Natural killer cell (primary cell): ENCODE measurements at regions of chr2 and their contacts with region 1.

Region 1: GRCh38 chr2:85852937-85853498 is 35.8 kb downstream of the ST3GAL5 start:
- DNase-seq: peak; percentile 71 to 89
- ATAC-seq: peak; percentile 81 to 92 (median 86)
- H3K4me3 ChIP-seq: peak overlapping the region; percentile 12
- H3K4me3 Mint-ChIP-seq: peak overlapping the region; percentile 91
- H3K27ac ChIP-seq: peak overlapping the region; percentile 100
- H3K27ac Mint-ChIP-seq: peak overlapping the region; percentile 94 to 99
- H3K4me1 ChIP-seq: peaks cover 61% of the 10 kb centered on the region
- H3K4me1 Mint-ChIP-seq: peaks cover 66 to 67% of the 10 kb centered on the region in 2 donors
- H3K27me3 ChIP-seq: no peaks in the 10 kb centered on the region
- H3K27me3 Mint-ChIP-seq: no peaks in the 10 kb centered on the region
- CTCF ChIP-seq: no peak

Region 2: GRCh38 chr2:85694052-85695025 is 158.7 kb before region 1 on chr2 and contains the start of gene GNLY:
- intact Hi-C with region 1: loop called (anchors 2 kb)
- DNase-seq: peak; percentile 53 to 77
- ATAC-seq: peak; percentile 57 to 87 (median 79)
- H3K4me3 ChIP-seq: peak within 1 kb of the TSS; percentile 76
- H3K4me3 Mint-ChIP-seq: peak within 1 kb of the TSS; percentile 97
- H3K27ac ChIP-seq: peak within 1 kb of the TSS; percentile 85
- H3K27ac Mint-ChIP-seq: peak within 1 kb of the TSS; percentile 95 to 96
- H3K4me1 ChIP-seq: peaks cover 67% of the 10 kb centered on the region
- H3K4me1 Mint-ChIP-seq: peaks cover 74 to 80% of the 10 kb centered on the region in 2 donors
- H3K27me3 ChIP-seq: no peaks in the 10 kb centered on the region
- H3K27me3 Mint-ChIP-seq: no peaks in the 10 kb centered on the region
- CTCF ChIP-seq: no peak
- total RNA-seq, gene GNLY: 4,938 to 8,199 (median 6,542) TPM

Region 3: GRCh38 chr2:85813982-85814801 is 38.8 kb before region 1 on chr2:
- intact Hi-C with region 1: no loop called
- DNase-seq: peak; percentile 83 to 87
- ATAC-seq: peak; percentile 91 to 99 (median 96)
- H3K4me3 ChIP-seq: no peak overlapping the region
- H3K4me3 Mint-ChIP-seq: no peak overlapping the region
- H3K27ac ChIP-seq: no peak overlapping the region
- H3K27ac Mint-ChIP-seq: no peak overlapping the region
- H3K4me1 ChIP-seq: peaks cover 3% of the 10 kb centered on the region
- H3K4me1 Mint-ChIP-seq: peaks cover 0 to 6% of the 10 kb centered on the region in 2 donors
- H3K27me3 ChIP-seq: no peaks in the 10 kb centered on the region
- H3K27me3 Mint-ChIP-seq: peaks cover 5 to 11% of the 10 kb centered on the region in 2 donors
- CTCF ChIP-seq: peak; percentile 92

Region 4: DNA sequence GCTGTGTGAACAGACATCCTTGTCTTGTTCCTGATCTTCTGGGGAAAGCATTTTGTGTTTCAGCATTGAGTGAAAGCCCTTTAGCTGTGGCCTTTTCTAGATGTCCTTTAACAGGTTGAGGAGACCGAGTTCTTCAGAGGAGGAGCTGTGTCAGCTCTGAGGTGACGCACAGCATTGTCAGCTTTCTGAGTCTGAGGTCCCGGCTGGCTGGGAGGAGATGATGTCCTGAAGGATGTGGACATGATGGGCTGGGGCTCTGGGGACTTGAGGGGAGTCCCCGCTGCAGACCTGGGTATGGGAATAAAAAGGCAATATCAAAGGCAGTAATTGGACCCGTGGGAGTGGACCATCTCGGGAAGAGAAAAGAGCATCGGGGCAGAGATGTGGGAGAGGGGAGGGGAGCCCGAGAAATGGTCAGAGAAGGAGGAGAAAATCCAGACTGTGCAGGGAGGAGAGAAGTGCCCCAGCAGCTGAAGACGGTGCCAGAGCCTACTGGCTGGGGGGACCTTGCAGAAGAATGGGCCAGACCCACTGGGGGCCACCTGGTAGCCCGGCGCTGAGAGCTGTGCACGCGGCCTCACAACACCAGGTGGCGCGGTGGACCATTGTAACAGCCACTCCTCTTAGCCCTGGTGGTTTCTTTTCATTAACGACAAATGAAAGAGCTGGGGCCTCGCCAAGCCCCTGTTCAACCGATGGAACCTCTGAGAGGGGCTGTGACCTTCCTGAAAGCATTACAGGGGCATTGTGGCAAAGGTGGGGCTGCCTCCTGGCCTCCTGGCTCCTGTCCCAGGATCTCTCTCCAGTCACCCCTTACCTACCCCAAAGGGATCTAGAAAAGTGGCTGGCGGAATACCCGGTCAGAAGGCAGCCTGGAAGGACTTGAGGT is 25.8 kb before region 1 on chr2:
- intact Hi-C with region 1: loop called (anchors 1 kb)
- DNase-seq: peak; percentile 83 to 90
- ATAC-seq: peak; percentile 94 to 100 (median 99)
- H3K4me3 ChIP-seq: no peak overlapping the region
- H3K4me3 Mint-ChIP-seq: no peak overlapping the region
- H3K27ac ChIP-seq: no peak overlapping the region
- H3K27ac Mint-ChIP-seq: peak overlapping the region; percentile 16 to 80
- H3K4me1 ChIP-seq: peaks cover 12% of the 10 kb centered on the region
- H3K4me1 Mint-ChIP-seq: peaks cover 14 to 21% of the 10 kb centered on the region in 2 donors
- H3K27me3 ChIP-seq: no peaks in the 10 kb centered on the region
- H3K27me3 Mint-ChIP-seq: peaks cover 0 to 6% of the 10 kb centered on the region in 2 donors
- CTCF ChIP-seq: peak; percentile 93